A549 (cell line): ENCODE measurements at regions of chr17 and their contacts with region 1.

Region 1: GRCh38 chr17:76816590-76817135 is 51.5 kb upstream of the MGAT5B start:
- DNase-seq: peak; percentile 75 to 85
- ATAC-seq: peak; percentile 93 to 95
- H3K4me3 ChIP-seq: no peak overlapping the region
- H3K27ac ChIP-seq: no peak overlapping the region
- H3K4me1 ChIP-seq: no peaks in the 10 kb centered on the region
- CTCF ChIP-seq: peak; percentile 88
- EP300 ChIP-seq: no peak
- POLR2A ChIP-seq: no peak
- RAD21 ChIP-seq: peak; percentile 88 to 91

Region 2: GRCh38 chr17:76601065-76601464 is 215.6 kb before region 1 on chr17:
- CTCF ChIA-PET with region 1: no interaction called
- POLR2A ChIA-PET with region 1: no interaction called
- DNase-seq: no peak
- ATAC-seq: no peak
- H3K4me3 ChIP-seq: no peak overlapping the region
- H3K27ac ChIP-seq: no peak overlapping the region
- H3K4me1 ChIP-seq: peaks cover 8% of the 10 kb centered on the region; the same call in 2 of the 3 replicates
- CTCF ChIP-seq: no peak
- EP300 ChIP-seq: no peak
- POLR2A ChIP-seq: no peak
- RAD21 ChIP-seq: no peak

Region 3: GRCh38 chr17:76805319-76805718 is 11.3 kb before region 1 on chr17:
- CTCF ChIA-PET with region 1: interaction called, 21 read pairs
- POLR2A ChIA-PET with region 1: no interaction called
- DNase-seq: peak in 1 of 2 experiments; percentile 47
- ATAC-seq: peak in 1 of 2 experiments; percentile 42; a peak in 1 of 6 replicates
- H3K4me3 ChIP-seq: no peak overlapping the region
- H3K27ac ChIP-seq: peak overlapping the region in 1 of 2 experiments; percentile 33; a peak in 1 of 6 replicates
- H3K4me1 ChIP-seq: peaks cover 8% of the 10 kb centered on the region; the same call in 2 of the 3 replicates
- CTCF ChIP-seq: no peak
- EP300 ChIP-seq: no peak
- POLR2A ChIP-seq: no peak
- RAD21 ChIP-seq: no peak

Region 4: DNA sequence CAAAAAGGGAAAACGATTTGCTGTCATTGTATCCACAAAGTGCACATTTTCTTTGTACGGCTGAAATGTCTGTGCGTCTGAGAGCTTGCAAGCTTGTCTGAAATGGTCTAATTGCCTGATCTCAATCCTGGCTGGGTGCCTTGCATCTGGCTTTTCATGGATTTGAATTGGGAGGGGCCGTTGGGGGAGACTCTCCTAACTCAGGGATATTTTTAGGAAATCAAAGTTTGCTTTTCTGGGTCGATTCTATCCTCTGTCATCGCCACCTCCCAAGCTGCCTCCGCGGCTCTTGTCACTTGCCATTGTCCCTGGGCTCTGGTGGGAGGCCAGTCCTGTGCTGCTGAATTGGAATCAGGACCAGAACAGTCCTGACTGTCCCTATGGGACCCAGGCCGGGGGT is 18.2 kb after region 1 on chr17:
- CTCF ChIA-PET with region 1: interaction called, 38 read pairs
- POLR2A ChIA-PET with region 1: no interaction called
- DNase-seq: no peak
- ATAC-seq: no peak
- H3K4me3 ChIP-seq: no peak overlapping the region
- H3K27ac ChIP-seq: no peak overlapping the region
- H3K4me1 ChIP-seq: no peaks in the 10 kb centered on the region; the same call in 2 of the 3 replicates
- CTCF ChIP-seq: no peak
- EP300 ChIP-seq: no peak
- POLR2A ChIP-seq: no peak
- RAD21 ChIP-seq: no peak